H1 (cell line): ENCODE measurements at regions of chr12 and their contacts with region 1.

Region 1: DNA sequence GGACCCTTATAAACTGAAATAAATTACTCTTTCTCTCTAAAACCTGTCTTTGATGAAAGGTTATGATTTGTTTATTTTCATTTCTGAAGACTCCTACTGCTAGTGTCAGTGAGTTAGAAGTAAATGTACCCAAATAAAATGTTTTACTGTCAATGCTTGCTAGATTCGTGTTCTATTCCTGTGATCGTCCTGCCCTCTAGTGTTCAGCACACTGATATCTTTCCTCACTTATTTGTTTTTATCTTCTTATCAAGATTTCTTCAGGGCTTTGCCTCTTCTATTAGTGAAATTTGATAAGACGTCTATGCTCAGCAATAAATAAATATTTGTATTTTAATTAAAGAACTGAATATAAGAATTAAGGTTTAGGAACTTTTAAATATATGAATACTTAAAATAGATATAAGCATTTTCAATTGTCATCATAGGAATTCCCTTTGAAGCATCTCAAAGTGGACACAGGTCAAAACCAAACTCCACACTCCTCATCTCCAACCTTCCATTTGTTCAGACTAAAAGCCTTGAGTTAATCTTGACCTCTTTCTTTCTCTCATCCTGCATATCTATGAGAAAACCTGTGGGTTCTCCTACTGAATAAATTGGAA is 75.8 kb downstream of the C12orf50 start:
- DNase-seq: no peak
- H3K4me3 ChIP-seq: no peak overlapping the region
- H3K27ac ChIP-seq: no peak overlapping the region
- H3K4me1 ChIP-seq: no peaks in the 10 kb centered on the region
- H3K27me3 ChIP-seq: no peaks in the 10 kb centered on the region
- CTCF ChIP-seq: peak in 2 of 3 experiments; percentile 38 to 68; a peak in 2 of 4 replicates
- EP300 ChIP-seq: no peak
- POLR2A ChIP-seq: no peak
- RAD21 ChIP-seq: peak; percentile 78 to 85

Region 2: DNA sequence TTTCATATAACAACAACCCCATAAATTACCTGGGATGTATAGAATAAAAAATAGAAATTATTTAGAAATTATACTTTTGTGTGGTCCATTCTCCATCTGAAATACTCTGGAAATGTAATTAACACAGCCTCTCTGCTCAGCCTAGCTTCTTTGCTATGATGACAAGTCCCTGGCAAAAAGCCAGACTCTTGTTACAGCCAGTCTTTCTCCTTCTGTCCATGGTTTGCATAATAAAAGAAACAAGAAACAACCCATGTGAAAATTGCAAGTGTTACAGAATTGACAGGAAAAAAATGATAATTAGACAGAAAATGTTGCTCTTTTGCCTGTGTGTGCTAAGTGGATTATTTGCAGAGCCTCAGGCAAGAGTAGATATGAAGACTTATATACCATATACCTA is 14.5 kb after region 1 on chr12:
- CTCF ChIA-PET with region 1: interaction called, 11 read pairs
- POLR2A ChIA-PET with region 1: no interaction called
- DNase-seq: no peak
- H3K4me3 ChIP-seq: no peak overlapping the region
- H3K27ac ChIP-seq: no peak overlapping the region
- H3K4me1 ChIP-seq: no peaks in the 10 kb centered on the region
- H3K27me3 ChIP-seq: no peaks in the 10 kb centered on the region
- CTCF ChIP-seq: no peak
- EP300 ChIP-seq: no peak
- POLR2A ChIP-seq: no peak
- RAD21 ChIP-seq: no peak